ENCODE measurements at regions of chr4 and their contacts with region 1.

Region 1: GRCh38 chr4:128454281-128455075 is 166.9 kb upstream of the PGRMC2 start:
- DNase-seq: peak; percentile 82 to 96
- H3K4me3 ChIP-seq: no peak overlapping the region
- CTCF ChIP-seq: peak in 1 of 3 donors; percentile 46
- POLR2A ChIP-seq: no peak

Region 2: GRCh38 chr4:128809477-128810330 is 355.2 kb after region 1 on chr4 and contains the start of gene JADE1:
- intact Hi-C with region 1: loop called (anchors 10 kb)
- DNase-seq: peak; percentile 91 to 98
- H3K4me3 ChIP-seq: peak within 1 kb of the TSS; percentile 87
- CTCF ChIP-seq: no peak
- POLR2A ChIP-seq: peak in 1 of 2 donors; percentile 6
- total RNA-seq, gene JADE1: 13.5 to 36.7 (median 19.6) TPM

Region 3: DNA sequence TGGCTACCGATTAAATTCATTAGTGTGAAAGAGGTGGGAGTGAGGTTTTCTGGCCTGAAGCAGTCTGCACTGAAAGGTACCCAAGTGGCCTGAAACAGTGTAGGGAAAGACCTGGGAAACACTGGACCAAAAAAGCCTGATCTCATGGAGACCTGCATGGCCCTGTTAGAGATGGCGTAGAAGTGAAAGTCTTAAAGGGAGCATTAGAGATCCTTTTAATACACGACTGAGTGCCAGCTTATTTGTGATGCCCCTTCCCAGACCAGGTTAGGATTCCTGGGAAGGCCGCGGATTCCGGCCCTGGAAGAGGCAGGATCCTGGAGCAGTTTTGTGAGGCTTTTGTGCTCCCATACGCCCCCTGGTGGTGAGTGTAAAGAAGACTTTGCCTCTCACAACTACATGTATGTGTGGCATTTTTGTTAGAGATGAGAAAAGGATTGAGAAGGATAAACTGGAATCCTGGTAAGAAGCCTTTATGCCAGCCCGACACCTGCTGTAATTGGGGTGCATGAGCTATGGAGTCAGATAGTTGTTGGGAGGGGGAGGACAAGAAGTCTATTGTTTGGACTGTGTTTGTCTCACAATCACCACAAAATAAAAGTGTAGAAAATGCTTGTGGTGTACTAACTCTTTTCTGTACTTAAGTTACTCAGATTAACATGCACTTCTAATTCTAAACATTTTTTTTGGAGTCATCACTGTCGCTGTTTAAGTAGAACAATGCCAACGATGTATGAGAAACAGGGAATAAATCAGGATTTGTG is 409.0 kb after region 1 on chr4:
- intact Hi-C with region 1: loop called (anchors 5 kb)
- DNase-seq: peak; percentile 63 to 94
- H3K4me3 ChIP-seq: no peak overlapping the region
- CTCF ChIP-seq: peak in 1 of 3 donors; percentile 71
- POLR2A ChIP-seq: no peak

Region 4: GRCh38 chr4:129278868-129279267 is 824.4 kb after region 1 on chr4:
- intact Hi-C with region 1: no loop called
- DNase-seq: no peak
- H3K4me3 ChIP-seq: no peak overlapping the region
- CTCF ChIP-seq: no peak
- POLR2A ChIP-seq: no peak